ENCODE measurements at regions of chr13 and their contacts with region 1.

Region 1: GRCh38 chr13:32586080-32586900 is at the start of gene PDS5B:
- DNase-seq: peak; percentile 99
- ATAC-seq: peak; percentile 90
- H3K4me3 Mint-ChIP-seq: peak within 1 kb of the TSS; percentile 96
- H3K27ac Mint-ChIP-seq: peak within 1 kb of the TSS; percentile 91
- H3K4me1 Mint-ChIP-seq: peaks cover 41% of the 10 kb centered on the region
- H3K27me3 Mint-ChIP-seq: no peaks in the 10 kb centered on the region
- CTCF ChIP-seq: no peak
- total RNA-seq, gene PDS5B: 47.2 and 49.4 TPM in 2 replicates

Region 2: GRCh38 chr13:31199849-31200636 is 1386.2 kb before region 1 on chr13 and contains the start of gene B3GLCT:
- CTCF ChIA-PET with region 1: no interaction called
- POLR2A ChIA-PET with region 1: no interaction called
- intact Hi-C with region 1: loop called (anchors 2 kb)
- DNase-seq: peak; percentile 87
- ATAC-seq: peak; percentile 83
- H3K4me3 Mint-ChIP-seq: peak within 1 kb of the TSS; percentile 84
- H3K27ac Mint-ChIP-seq: peak within 1 kb of the TSS; percentile 84
- H3K4me1 Mint-ChIP-seq: peaks cover 18% of the 10 kb centered on the region
- H3K27me3 Mint-ChIP-seq: no peaks in the 10 kb centered on the region
- CTCF ChIP-seq: peak; percentile 63
- total RNA-seq, gene B3GLCT: 2.9 and 3.0 TPM in 2 replicates

Region 3: DNA sequence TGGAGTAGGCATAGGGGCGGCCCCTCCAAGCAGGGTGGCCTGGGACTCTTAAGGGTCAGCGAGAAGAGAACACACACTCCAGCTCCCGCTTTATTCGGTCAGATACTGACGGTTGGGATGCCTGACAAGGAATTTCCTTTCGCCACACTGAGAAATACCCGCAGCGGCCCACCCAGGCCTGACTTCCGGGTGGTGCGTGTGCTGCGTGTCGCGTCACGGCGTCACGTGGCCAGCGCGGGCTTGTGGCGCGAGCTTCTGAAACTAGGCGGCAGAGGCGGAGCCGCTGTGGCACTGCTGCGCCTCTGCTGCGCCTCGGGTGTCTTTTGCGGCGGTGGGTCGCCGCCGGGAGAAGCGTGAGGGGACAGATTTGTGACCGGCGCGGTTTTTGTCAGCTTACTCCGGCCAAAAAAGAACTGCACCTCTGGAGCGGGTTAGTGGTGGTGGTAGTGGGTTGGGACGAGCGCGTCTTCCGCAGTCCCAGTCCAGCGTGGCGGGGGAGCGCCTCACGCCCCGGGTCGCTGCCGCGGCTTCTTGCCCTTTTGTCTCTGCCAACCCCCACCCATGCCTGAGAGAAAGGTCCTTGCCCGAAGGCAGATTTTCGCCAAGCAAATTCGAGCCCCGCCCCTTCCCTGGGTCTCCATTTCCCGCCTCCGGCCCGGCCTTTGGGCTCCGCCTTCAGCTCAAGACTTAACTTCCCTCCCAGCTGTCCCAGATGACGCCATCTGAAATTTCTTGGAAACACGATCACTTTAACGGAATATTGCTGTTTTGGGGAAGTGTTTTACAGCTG is 270.9 kb before region 1 on chr13 and contains the starts of genes BRCA2 and ZAR1L:
- CTCF ChIA-PET with region 1: interaction called, 6 read pairs
- POLR2A ChIA-PET with region 1: interaction called, 6 read pairs
- intact Hi-C with region 1: loop called (anchors 1 kb)
- DNase-seq: peak; percentile 80
- ATAC-seq: peak; percentile 88
- H3K4me3 Mint-ChIP-seq: peak within 1 kb of the TSS; percentile 94
- H3K27ac Mint-ChIP-seq: peak within 1 kb of the TSS; percentile 100
- H3K4me1 Mint-ChIP-seq: peaks cover 14% of the 10 kb centered on the region
- H3K27me3 Mint-ChIP-seq: no peaks in the 10 kb centered on the region
- CTCF ChIP-seq: no peak
- total RNA-seq, gene BRCA2: 4.5 and 6.6 TPM in 2 replicates
- total RNA-seq, gene ZAR1L: not detected in 2 replicates

Region 4: GRCh38 chr13:32538621-32539246 is 47.6 kb before region 1 on chr13 and contains the start of gene N4BP2L2:
- CTCF ChIA-PET with region 1: interaction called, 15 read pairs
- POLR2A ChIA-PET with region 1: interaction called, 10 read pairs
- intact Hi-C with region 1: loop called (anchors 1 kb)
- DNase-seq: peak; percentile 77
- ATAC-seq: peak; percentile 96
- H3K4me3 Mint-ChIP-seq: peak within 1 kb of the TSS; percentile 99
- H3K27ac Mint-ChIP-seq: peak within 1 kb of the TSS; percentile 100
- H3K4me1 Mint-ChIP-seq: peaks cover 50% of the 10 kb centered on the region
- H3K27me3 Mint-ChIP-seq: no peaks in the 10 kb centered on the region
- CTCF ChIP-seq: no peak
- total RNA-seq, gene N4BP2L2: 118 and 153 TPM in 2 replicates

Region 5: DNA sequence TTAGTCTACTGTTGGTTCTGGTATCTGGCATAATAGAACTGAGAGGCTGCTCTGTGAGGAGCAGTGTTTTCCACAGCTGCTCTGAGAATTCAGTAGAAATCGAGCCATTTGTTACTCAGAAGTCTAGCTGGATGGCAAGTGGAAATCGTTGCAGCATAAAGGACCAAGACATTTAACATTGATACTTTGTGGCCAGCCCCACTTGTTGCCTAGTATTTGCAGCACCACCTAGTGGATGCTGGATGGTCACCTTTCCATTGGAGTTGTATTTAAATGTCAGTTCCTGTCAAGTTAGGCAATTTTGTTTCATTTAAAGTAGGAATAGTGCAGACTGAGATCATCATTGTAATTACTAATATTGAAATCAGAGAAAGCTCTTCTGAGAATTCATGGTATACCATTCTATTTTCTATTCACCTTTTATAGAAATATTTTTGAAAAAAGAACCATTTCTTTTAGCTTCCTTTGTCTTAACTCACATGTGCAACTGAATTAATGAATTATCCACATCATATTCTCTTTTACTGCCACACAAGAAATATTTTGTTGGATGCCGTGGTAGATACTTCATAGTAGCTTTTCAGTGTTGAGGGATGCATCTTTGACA is 64.5 kb after region 1 on chr13:
- CTCF ChIA-PET with region 1: interaction called, 30 read pairs
- POLR2A ChIA-PET with region 1: interaction called, 3 read pairs
- intact Hi-C with region 1: loop called (anchors 1 kb)
- DNase-seq: no peak
- ATAC-seq: peak; percentile 85
- H3K4me3 Mint-ChIP-seq: no peak overlapping the region
- H3K27ac Mint-ChIP-seq: no peak overlapping the region
- H3K4me1 Mint-ChIP-seq: peaks cover 54% of the 10 kb centered on the region
- H3K27me3 Mint-ChIP-seq: no peaks in the 10 kb centered on the region
- CTCF ChIP-seq: peak; percentile 78

Region 6: GRCh38 chr13:33017323-33017929 is 431.1 kb after region 1 on chr13:
- CTCF ChIA-PET with region 1: no interaction called
- POLR2A ChIA-PET with region 1: no interaction called
- intact Hi-C with region 1: loop called (anchors 10 kb)
- DNase-seq: no peak
- ATAC-seq: peak; percentile 28
- H3K4me3 Mint-ChIP-seq: peak overlapping the region; percentile 30
- H3K27ac Mint-ChIP-seq: no peak overlapping the region
- H3K4me1 Mint-ChIP-seq: peaks cover 13% of the 10 kb centered on the region
- H3K27me3 Mint-ChIP-seq: peaks cover 59% of the 10 kb centered on the region
- CTCF ChIP-seq: no peak

Region 7: GRCh38 chr13:33723772-33724435 is 1137.6 kb after region 1 on chr13:
- CTCF ChIA-PET with region 1: interaction called, 5 read pairs
- POLR2A ChIA-PET with region 1: interaction called, 7 read pairs
- intact Hi-C with region 1: loop called (anchors 2 kb)
- DNase-seq: no peak
- ATAC-seq: peak; percentile 72
- H3K4me3 Mint-ChIP-seq: no peak overlapping the region
- H3K27ac Mint-ChIP-seq: no peak overlapping the region
- H3K4me1 Mint-ChIP-seq: peaks cover 21% of the 10 kb centered on the region
- H3K27me3 Mint-ChIP-seq: peaks cover 21% of the 10 kb centered on the region
- CTCF ChIP-seq: no peak

Measured in activated B cell treated with CpG ODN at 0.5 μM for 24 hours (primary cell).